Right ventricle myocardium inferior (tissue), 1 donor: ENCODE measurements at regions of chr17 and their contacts with region 1.

Region 1: GRCh38 chr17:64661976-64662773 is at the start of gene SMURF2:
- DNase-seq: peak; percentile 92
- ATAC-seq: peak; percentile 95
- total RNA-seq, gene SMURF2: 12.3 TPM

Region 2: DNA sequence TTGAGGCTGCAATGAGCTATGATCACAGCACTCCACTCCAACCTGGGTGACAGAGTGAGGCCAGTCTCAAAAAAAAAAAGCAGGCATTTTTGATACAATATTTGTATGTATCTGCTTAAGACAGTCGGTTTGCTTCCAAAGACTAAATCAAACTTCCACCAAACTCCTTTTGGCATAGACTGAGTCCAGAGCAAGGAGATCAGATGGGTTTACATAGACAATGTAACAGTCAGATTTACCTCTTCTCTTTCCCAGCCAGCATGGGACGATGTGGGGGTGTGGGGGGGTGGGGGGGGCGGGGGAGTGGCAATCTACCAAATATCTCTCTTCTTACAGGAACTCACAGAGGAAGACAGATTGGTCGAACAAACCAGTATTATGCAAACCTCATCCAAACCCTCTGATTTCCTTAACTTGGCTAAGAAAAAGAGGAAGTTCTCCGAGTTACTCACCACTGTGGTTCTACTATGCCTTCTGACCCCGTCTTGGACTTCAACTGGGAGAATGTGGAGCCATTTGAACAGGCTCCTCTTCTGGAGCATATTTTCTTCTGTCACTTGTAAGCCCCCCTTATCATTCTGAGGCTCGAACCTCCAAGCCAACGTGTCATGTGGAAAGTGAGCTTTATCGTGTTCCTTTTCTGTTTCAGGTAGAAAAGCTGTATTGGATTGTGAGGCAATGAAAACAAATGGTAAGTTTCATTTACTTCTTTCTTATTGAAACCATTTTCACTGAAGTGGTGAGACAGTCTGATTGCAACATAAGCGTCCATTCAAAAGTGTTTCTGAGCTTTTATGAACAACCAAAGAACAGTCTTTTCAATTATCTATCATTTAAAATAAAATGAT is 213.3 kb before region 1 on chr17 and contains the start of gene MILR1:
- intact Hi-C with region 1: no loop called
- DNase-seq: no peak
- ATAC-seq: peak; percentile 96
- total RNA-seq, gene MILR1: 3.8 TPM

Region 3: DNA sequence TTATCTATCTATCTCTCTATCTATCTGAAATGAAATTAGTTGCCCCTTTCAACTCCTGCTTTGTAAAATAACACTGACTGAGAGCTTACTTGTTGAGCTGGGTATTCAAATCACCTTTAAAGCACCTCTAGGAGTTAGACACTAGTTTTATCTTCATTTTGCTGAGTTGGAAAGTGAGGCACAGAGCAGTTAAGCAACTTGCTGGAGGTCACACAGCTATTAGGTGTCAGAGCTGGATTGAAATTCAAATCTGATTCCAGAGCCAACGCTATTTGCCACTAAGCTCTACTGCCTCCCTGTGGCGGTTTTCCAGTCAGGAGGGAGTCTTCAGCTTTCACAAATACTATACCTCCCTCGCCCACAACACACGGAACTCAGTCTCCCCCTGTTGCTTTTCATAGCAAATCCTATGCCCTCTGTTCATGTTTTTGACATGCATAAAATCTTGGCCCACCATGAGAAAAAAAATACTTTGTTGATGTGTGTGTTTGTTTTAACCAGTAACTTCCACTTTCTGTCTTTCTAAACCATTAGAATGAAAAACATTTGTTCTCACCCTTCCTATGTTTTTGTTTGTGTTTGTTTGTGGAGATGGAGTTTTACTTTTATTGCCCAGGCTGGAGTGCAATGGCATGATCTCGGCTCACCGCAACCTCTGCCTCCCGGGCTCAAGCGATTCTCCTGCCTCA is 74.8 kb after region 1 on chr17:
- intact Hi-C with region 1: loop called (anchors 5 kb)
- DNase-seq: no peak
- ATAC-seq: no peak